Dorsolateral prefrontal cortex (tissue), 120 donors: ENCODE measurements at regions of chr7 and their contacts with region 1.

Region 1: GRCh38 chr7:155380221-155380861 is 77.6 kb upstream of the EN2 start:
- DNase-seq: peak in 9 of 10 donors; percentile 46 to 88 (median 61)
- H3K4me3 ChIP-seq: peak overlapping the region in 4 of 59 donors; percentile 49 to 72 (median 66)
- H3K27ac ChIP-seq: no peak overlapping the region
- H3K27me3 ChIP-seq: peaks cover 22 to 98% (median 84%) of the 10 kb centered on the region in 45 donors
- CTCF ChIP-seq: peak; percentile 19 to 92 (median 68)

Region 2: GRCh38 chr7:155188821-155189581 is 191.3 kb before region 1 on chr7:
- intact Hi-C with region 1: no loop called
- DNase-seq: no peak
- H3K4me3 ChIP-seq: no peak overlapping the region
- H3K27ac ChIP-seq: no peak overlapping the region
- H3K27me3 ChIP-seq: peaks cover 0 to 10% (median 0%) of the 10 kb centered on the region in 45 donors
- CTCF ChIP-seq: no peak

Region 3: GRCh38 chr7:155405399-155406318 is 25.3 kb after region 1 on chr7:
- intact Hi-C with region 1: loop called in 1 of 2 experiments (anchors 2 kb)
- DNase-seq: peak in 3 of 10 donors; percentile 19 to 71 (median 36)
- H3K4me3 ChIP-seq: peak overlapping the region in 4 of 59 donors; percentile 37 to 75 (median 66)
- H3K27ac ChIP-seq: peak overlapping the region in 7 of 59 donors; percentile 46 to 97 (median 84)
- H3K27me3 ChIP-seq: peaks cover 0 to 78% (median 43%) of the 10 kb centered on the region in 45 donors
- CTCF ChIP-seq: peak in 37 of 56 donors; percentile 9 to 73 (median 38)

Region 4: DNA sequence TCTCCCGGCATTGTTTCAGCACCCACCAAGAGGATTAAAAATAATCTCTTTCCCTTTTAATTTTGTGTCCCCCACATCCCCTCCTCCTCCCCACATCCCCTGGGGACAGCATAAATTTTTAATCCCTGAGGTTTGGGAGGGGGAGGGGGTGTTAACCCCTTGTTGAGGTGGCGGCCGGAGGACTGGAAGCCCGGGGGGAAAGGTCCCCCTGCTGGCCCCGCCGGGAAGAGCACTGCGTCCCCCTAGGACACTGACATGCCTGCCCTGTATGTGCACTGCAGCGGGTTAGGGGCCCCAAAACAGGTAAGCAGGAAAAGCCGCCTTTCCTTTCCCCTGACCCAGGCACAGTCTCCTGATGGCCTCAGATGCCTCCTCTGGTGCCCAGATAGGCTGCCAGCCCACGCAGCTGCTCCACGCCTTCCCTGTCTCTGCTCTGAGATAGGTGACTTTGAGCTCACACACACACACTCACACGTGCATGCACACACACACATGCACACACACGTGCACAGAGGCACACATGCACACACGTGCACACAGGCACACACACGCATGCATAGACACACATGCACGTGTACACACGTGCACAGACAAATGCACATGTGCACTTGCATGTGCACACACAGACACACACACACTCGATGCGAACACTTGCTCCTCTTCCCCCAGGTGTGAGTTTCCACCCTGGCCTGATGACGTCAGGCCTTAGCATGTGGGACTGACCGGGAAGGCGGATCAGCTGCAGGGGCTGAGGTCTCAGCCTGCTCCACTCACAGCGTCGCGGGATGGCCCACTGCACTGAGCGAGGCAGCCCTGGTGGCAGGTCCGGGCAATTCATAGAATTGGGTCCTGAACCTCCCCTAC is 153.7 kb after region 1 on chr7:
- intact Hi-C with region 1: loop called in 1 of 2 experiments (anchors 5 kb)
- DNase-seq: peak in 2 of 10 donors; percentile 35 to 60
- H3K4me3 ChIP-seq: peak overlapping the region in 55 of 59 donors; percentile 15 to 68 (median 49)
- H3K27ac ChIP-seq: peak overlapping the region in 1 of 59 donors; percentile 83
- H3K27me3 ChIP-seq: peaks cover 0 to 62% (median 39%) of the 10 kb centered on the region in 45 donors
- CTCF ChIP-seq: peak in 48 of 56 donors; percentile 13 to 57 (median 38)

Region 5: DNA sequence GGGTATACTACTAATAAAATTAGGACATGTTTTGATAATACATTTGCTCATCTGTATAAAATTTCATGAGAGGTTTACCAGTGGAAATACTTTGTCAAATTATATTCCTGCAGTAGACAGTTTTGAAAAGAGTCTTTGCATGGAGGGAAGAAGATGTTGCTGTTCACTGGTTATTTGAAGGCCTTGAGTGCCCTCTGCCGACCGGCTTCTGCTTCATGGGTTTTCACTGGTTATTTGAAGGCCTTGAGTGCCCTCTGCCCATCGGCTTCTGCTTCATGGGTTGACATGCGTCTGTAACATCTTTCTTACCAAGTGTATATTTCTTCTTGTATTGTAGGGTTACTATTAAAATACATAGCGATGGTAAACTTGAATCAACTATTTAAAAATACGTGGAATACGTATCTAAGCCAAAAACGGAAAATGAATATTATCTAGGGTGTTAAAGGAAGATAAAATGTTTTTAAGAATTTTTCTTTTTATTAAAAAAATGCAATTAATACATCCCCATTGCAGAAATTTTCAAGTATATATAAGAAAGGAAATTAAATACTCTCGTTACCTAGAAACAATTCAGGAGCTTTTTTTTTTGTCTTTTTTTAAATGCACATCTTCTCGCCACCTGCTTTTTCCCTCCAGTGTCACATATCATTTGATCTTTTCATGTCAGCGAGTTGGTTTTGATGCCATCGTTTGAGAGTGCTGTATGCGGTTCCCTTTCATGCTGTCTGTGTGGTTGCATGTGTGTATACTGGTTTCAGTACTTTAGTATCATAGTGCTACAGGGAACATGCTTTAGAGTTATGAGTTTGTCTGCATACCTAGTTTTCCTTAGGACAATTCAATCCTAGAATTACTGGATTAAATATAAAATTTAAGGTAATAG is 358.6 kb after region 1 on chr7:
- intact Hi-C with region 1: loop called (anchors 2 to 10 kb)
- DNase-seq: peak; percentile 77 to 94 (median 83)
- H3K4me3 ChIP-seq: no peak overlapping the region
- H3K27ac ChIP-seq: no peak overlapping the region
- H3K27me3 ChIP-seq: no peaks in the 10 kb centered on the region
- CTCF ChIP-seq: peak; percentile 33 to 97 (median 81)

Region 6: DNA sequence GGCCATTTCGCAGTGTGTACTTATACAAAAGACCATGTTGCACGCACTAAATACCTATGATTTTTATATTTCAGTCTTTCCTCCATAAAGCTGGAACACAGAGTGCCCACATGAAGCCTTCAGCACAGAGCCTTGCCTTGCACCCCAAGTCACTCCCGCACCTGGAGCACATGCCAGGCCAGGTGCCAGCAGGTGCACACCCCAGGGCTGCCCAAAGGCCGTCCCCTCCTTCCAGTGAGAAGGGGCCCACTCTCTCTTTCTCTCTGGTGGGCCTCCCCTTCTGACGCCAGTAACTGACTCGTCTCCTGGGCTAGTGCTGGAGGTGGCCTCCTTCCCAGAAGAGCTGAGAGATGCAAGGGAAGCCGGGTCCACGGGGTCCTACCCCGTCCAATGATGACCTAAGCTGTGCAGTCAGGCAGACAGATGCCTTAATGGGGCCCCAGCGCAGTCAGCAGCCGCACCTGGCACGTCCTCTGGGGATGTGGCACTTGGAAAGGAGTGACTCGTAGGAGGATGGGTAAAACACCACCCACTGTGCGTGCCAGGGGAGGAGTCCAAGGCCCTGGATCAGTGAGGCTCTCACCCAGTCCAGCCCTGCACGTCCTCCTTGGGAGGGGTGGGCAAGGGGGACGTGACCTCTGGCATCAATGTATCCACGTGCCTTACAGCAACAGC is 449.6 kb after region 1 on chr7:
- intact Hi-C with region 1: loop called in 1 of 2 experiments (anchors 5 kb)
- DNase-seq: no peak
- H3K4me3 ChIP-seq: no peak overlapping the region
- H3K27ac ChIP-seq: no peak overlapping the region
- H3K27me3 ChIP-seq: peaks cover 0 to 23% (median 4%) of the 10 kb centered on the region in 45 donors
- CTCF ChIP-seq: no peak